Naive thymus-derived CD4-positive, alpha-beta T cell (primary cell): ENCODE measurements at regions of chr7 and their contacts with region 1.

Region 1: GRCh38 chr7:150988230-150989226 is 2.3 kb upstream of the NOS3 start:
- DNase-seq: peak; percentile 49 to 72 (median 64)
- ATAC-seq: peak; percentile 79
- H3K4me3 ChIP-seq: peak overlapping the region; percentile 10
- H3K4me3 Mint-ChIP-seq: peak overlapping the region; percentile 37 to 83 (median 72)
- H3K27ac ChIP-seq: no peak overlapping the region
- H3K27ac Mint-ChIP-seq: peak overlapping the region in 6 of 9 donors; percentile 5 to 65 (median 26)
- H3K4me1 ChIP-seq: peaks cover 12 to 21% of the 10 kb centered on the region in 2 donors
- H3K4me1 Mint-ChIP-seq: peaks cover 19 to 43% (median 31%) of the 10 kb centered on the region in 7 donors
- H3K27me3 ChIP-seq: no peaks in the 10 kb centered on the region
- H3K27me3 Mint-ChIP-seq: peaks cover 0 to 34% (median 0%) of the 10 kb centered on the region in 5 donors

Region 2: GRCh38 chr7:150778738-150779301 is 209.7 kb before region 1 on chr7:
- CTCF ChIA-PET with region 1: no interaction called
- POLR2A ChIA-PET with region 1: no interaction called
- intact Hi-C with region 1: loop called in 1 of 2 experiments (anchors 10 kb)
- DNase-seq: peak; percentile 31 to 76 (median 60)
- ATAC-seq: peak; percentile 88
- H3K4me3 ChIP-seq: no peak overlapping the region
- H3K4me3 Mint-ChIP-seq: no peak overlapping the region
- H3K27ac ChIP-seq: no peak overlapping the region
- H3K27ac Mint-ChIP-seq: no peak overlapping the region
- H3K4me1 ChIP-seq: no peaks in the 10 kb centered on the region
- H3K4me1 Mint-ChIP-seq: peaks cover 0 to 8% (median 4%) of the 10 kb centered on the region in 7 donors
- H3K27me3 ChIP-seq: no peaks in the 10 kb centered on the region
- H3K27me3 Mint-ChIP-seq: peaks cover 0 to 42% (median 0%) of the 10 kb centered on the region in 5 donors

Region 3: GRCh38 chr7:150962553-150963399 is 25.8 kb before region 1 on chr7:
- CTCF ChIA-PET with region 1: interaction called, 95 read pairs
- POLR2A ChIA-PET with region 1: interaction called, 7 read pairs
- intact Hi-C with region 1: loop called (anchors 1 kb)
- DNase-seq: peak; percentile 31 to 69 (median 53)
- ATAC-seq: peak; percentile 82
- H3K4me3 ChIP-seq: no peak overlapping the region
- H3K4me3 Mint-ChIP-seq: peak overlapping the region in 1 of 10 donors; percentile 51
- H3K27ac ChIP-seq: no peak overlapping the region
- H3K27ac Mint-ChIP-seq: no peak overlapping the region
- H3K4me1 ChIP-seq: no peaks in the 10 kb centered on the region
- H3K4me1 Mint-ChIP-seq: peaks cover 9 to 41% (median 24%) of the 10 kb centered on the region in 7 donors
- H3K27me3 ChIP-seq: no peaks in the 10 kb centered on the region
- H3K27me3 Mint-ChIP-seq: peaks cover 15 to 36% (median 20%) of the 10 kb centered on the region in 5 donors

Region 4: DNA sequence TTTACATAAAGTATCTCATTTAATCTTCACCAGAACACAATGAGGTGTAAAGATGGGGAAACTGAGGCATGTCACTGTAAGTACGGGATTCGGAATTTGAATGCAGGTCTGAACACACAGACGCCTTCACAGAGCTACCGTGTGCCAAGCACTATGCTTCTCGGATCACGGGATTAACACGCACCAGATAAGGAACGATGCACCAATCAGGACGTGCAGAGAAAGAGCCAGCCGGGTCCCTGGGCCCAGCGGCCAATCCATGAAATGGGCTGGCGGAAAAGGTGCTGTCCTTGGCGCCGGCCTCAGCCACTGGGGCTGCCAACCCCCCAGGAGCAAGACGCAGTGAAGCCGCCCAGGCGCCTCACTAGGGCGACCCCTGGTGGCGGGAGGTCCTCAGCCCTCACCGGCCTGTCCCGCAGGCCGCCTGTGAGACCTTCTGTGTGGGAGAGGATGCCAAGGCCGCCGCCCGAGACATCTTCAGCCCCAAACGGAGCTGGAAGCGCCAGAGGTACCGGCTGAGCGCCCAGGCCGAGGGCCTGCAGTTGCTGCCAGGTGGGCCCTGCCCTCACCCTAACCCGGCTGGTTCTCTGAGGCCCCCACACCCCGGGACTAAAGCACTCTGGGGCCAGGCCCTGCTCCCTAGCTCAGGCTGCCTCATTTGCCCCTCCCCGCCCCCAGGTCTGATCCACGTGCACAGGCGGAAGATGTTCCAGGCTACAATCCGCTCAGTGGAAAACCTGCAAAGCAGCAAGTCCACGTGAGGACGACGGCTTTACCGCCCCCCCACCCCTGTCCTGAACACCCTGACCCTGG is 20.2 kb after region 1 on chr7:
- CTCF ChIA-PET with region 1: interaction called, 28 read pairs
- POLR2A ChIA-PET with region 1: interaction called, 33 read pairs
- intact Hi-C with region 1: no loop called
- DNase-seq: peak; percentile 45 to 82 (median 65)
- ATAC-seq: peak; percentile 59
- H3K4me3 ChIP-seq: peak overlapping the region; percentile 62
- H3K4me3 Mint-ChIP-seq: peak overlapping the region; percentile 80 to 90 (median 85)
- H3K27ac ChIP-seq: peak overlapping the region; percentile 73
- H3K27ac Mint-ChIP-seq: peak overlapping the region; percentile 73 to 97 (median 91)
- H3K4me1 ChIP-seq: peaks cover 49 to 66% of the 10 kb centered on the region in 2 donors
- H3K4me1 Mint-ChIP-seq: peaks cover 39 to 77% (median 64%) of the 10 kb centered on the region in 7 donors
- H3K27me3 ChIP-seq: no peaks in the 10 kb centered on the region
- H3K27me3 Mint-ChIP-seq: no peaks in the 10 kb centered on the region

Region 5: DNA sequence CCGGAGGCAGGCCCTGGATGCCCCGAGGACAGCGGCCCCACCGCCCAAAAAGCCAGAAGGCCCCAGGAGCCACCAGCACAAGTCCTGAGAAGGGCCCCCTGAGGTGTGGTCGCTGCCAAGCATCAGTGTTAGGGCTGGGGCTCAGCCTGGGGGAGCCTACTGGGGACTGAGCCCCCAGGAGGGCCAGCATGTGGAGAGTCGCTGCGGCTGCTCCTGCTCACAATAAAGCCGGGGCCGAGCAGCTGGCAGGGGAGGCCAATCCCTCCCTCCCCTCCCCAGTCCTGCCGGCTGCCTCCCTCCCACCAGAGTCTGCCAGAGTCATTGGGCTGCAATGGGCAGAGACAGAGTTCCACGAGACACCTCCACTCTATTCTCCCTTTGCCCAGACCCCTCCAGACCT is 56.7 kb after region 1 on chr7:
- CTCF ChIA-PET with region 1: no interaction called
- POLR2A ChIA-PET with region 1: no interaction called
- intact Hi-C with region 1: no loop called
- DNase-seq: no peak
- ATAC-seq: no peak
- H3K4me3 ChIP-seq: no peak overlapping the region
- H3K4me3 Mint-ChIP-seq: no peak overlapping the region
- H3K27ac ChIP-seq: no peak overlapping the region
- H3K27ac Mint-ChIP-seq: no peak overlapping the region
- H3K4me1 ChIP-seq: no peaks in the 10 kb centered on the region
- H3K4me1 Mint-ChIP-seq: peaks cover 0 to 4% (median 0%) of the 10 kb centered on the region in 7 donors
- H3K27me3 ChIP-seq: no peaks in the 10 kb centered on the region
- H3K27me3 Mint-ChIP-seq: peaks cover 0 to 6% (median 0%) of the 10 kb centered on the region in 5 donors

Region 6: GRCh38 chr7:151057989-151058780 is 69.7 kb after region 1 on chr7:
- CTCF ChIA-PET with region 1: no interaction called
- POLR2A ChIA-PET with region 1: no interaction called
- intact Hi-C with region 1: loop called in 1 of 2 experiments (anchors 5 kb)
- DNase-seq: peak; percentile 80 to 99 (median 97)
- ATAC-seq: peak; percentile 96
- H3K4me3 ChIP-seq: peak overlapping the region; percentile 78
- H3K4me3 Mint-ChIP-seq: peak overlapping the region; percentile 91 to 99 (median 94)
- H3K27ac ChIP-seq: peak overlapping the region; percentile 92
- H3K27ac Mint-ChIP-seq: peak overlapping the region; percentile 86 to 96 (median 93)
- H3K4me1 ChIP-seq: peaks cover 25 to 32% of the 10 kb centered on the region in 2 donors
- H3K4me1 Mint-ChIP-seq: peaks cover 25 to 41% (median 38%) of the 10 kb centered on the region in 7 donors
- H3K27me3 ChIP-seq: no peaks in the 10 kb centered on the region
- H3K27me3 Mint-ChIP-seq: no peaks in the 10 kb centered on the region

Region 7: DNA sequence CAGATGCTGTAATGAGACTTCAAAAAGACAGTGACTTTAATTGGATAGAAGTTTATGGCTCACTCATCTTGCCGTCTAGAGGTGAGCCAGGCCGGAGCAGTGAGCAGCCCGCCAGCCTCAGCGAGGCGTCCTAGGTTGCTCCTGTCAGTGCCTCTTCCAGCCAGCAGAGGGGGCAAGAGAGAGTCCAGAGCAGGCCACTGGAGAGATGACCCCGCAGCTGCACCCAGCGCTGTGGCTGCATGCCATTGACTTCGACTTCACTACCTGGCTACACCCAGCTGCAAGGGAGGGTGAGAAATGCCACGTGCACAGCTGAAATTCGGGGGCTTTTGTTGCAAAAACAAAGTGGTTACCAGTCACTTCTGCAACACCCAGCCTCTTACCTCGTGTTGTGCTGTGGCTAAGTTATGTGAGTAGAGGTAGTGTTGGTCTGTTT is 379.6 kb after region 1 on chr7:
- CTCF ChIA-PET with region 1: no interaction called
- POLR2A ChIA-PET with region 1: no interaction called
- intact Hi-C with region 1: no loop called
- DNase-seq: peak; percentile 55 to 80 (median 69)
- ATAC-seq: peak; percentile 99
- H3K4me3 ChIP-seq: no peak overlapping the region
- H3K4me3 Mint-ChIP-seq: no peak overlapping the region
- H3K27ac ChIP-seq: no peak overlapping the region
- H3K27ac Mint-ChIP-seq: peak overlapping the region in 2 of 9 donors; percentile 46 to 56
- H3K4me1 ChIP-seq: peaks cover 0 to 4% of the 10 kb centered on the region in 2 donors
- H3K4me1 Mint-ChIP-seq: peaks cover 3 to 29% (median 12%) of the 10 kb centered on the region in 7 donors
- H3K27me3 ChIP-seq: no peaks in the 10 kb centered on the region
- H3K27me3 Mint-ChIP-seq: no peaks in the 10 kb centered on the region